AG04450 (cell line): ENCODE measurements at regions of chr7 and their contacts with region 1.

Region 1: GRCh38 chr7:136958016-136958415 is 89.6 kb downstream of the CHRM2 start:
- DNase-seq: no peak
- H3K4me3 ChIP-seq: no peak overlapping the region
- H3K27ac ChIP-seq: peak overlapping the region; percentile 40
- H3K27me3 ChIP-seq: no peaks in the 10 kb centered on the region
- CTCF ChIP-seq: no peak

Region 2: DNA sequence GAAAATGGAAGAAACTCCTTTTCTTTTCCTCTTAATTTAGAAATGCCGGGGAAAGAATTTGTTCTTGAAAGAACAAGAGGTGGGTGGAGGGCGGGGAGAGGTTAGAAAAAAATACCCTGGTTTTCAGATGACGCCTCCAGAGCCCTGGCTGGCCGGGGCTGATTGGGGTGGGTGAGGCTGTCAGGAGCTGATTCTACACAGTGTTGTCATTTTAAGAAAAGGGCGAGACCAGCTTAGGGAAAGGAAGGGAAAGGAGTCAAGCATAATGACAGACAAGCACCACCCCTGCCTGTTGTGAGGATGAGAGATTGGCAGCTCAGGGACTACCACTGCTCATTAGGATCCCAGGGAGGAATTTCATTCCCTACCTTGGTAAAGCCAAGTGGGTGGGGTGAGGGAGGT is 1199.5 kb before region 1 on chr7:
- CTCF ChIA-PET with region 1: no interaction called
- POLR2A ChIA-PET with region 1: interaction called, 12 read pairs
- DNase-seq: no peak
- H3K4me3 ChIP-seq: no peak overlapping the region
- H3K27ac ChIP-seq: peak overlapping the region; percentile 52
- H3K27me3 ChIP-seq: no peaks in the 10 kb centered on the region
- CTCF ChIP-seq: no peak

Region 3: GRCh38 chr7:136890399-136890798 is 67.6 kb before region 1 on chr7:
- CTCF ChIA-PET with region 1: no interaction called
- POLR2A ChIA-PET with region 1: no interaction called
- DNase-seq: no peak
- H3K4me3 ChIP-seq: no peak overlapping the region
- H3K27ac ChIP-seq: no peak overlapping the region
- H3K27me3 ChIP-seq: no peaks in the 10 kb centered on the region
- CTCF ChIP-seq: no peak